ENCODE measurements at regions of chr12 and their contacts with region 1.

Region 1: GRCh38 chr12:116319898-116320621 is 42.6 kb upstream of the MED13L start:
- DNase-seq: peak in 1 of 2 donors; percentile 86
- ATAC-seq: peak; percentile 93
- H3K4me3 ChIP-seq: no peak overlapping the region
- H3K27ac ChIP-seq: peak overlapping the region; percentile 91 to 98
- H3K4me1 ChIP-seq: peaks cover 0 to 7% of the 10 kb centered on the region in 2 donors
- H3K27me3 ChIP-seq: no peaks in the 10 kb centered on the region

Region 2: DNA sequence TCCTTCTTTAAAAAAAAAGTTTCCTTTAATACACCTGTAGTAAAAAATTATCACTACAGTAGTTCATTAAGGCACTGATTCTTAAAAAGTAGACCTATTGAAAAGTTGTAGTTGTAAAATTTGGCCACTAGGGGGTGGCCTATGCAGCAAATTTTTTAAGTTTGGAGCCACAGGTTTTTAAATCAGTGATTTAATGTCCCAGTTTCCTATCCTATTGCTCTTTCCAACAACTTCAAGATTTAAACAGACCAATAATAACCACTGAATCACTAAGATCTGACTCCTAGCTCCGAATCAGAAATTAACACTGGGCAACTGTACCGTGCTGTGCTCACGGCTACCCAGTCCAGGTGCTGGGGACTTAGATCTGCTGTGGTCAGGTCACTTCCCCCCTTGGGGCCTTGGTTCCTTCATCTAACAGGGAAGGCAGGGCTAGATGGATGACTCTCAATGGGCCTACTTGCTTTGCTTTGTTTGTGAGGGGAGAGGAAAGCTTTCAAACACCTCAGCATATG is 321.9 kb before region 1 on chr12:
- intact Hi-C with region 1: no loop called
- DNase-seq: no peak
- ATAC-seq: peak; percentile 75
- H3K4me3 ChIP-seq: no peak overlapping the region
- H3K27ac ChIP-seq: peak overlapping the region in 1 of 2 donors; percentile 59
- H3K4me1 ChIP-seq: peaks cover 0 to 2% of the 10 kb centered on the region in 2 donors
- H3K27me3 ChIP-seq: no peaks in the 10 kb centered on the region

Region 3: GRCh38 chr12:116222358-116222757 is 97.7 kb before region 1 on chr12:
- intact Hi-C with region 1: no loop called
- DNase-seq: no peak
- ATAC-seq: peak; percentile 81
- H3K4me3 ChIP-seq: no peak overlapping the region
- H3K27ac ChIP-seq: no peak overlapping the region
- H3K4me1 ChIP-seq: peaks cover 0 to 5% of the 10 kb centered on the region in 2 donors
- H3K27me3 ChIP-seq: no peaks in the 10 kb centered on the region

Region 4: GRCh38 chr12:116358893-116359761 is 39.1 kb after region 1 on chr12:
- intact Hi-C with region 1: loop called in 1 of 2 experiments (anchors 2 kb)
- DNase-seq: peak; percentile 97 to 98
- ATAC-seq: peak; percentile 91
- H3K4me3 ChIP-seq: no peak overlapping the region
- H3K27ac ChIP-seq: peak overlapping the region; percentile 22 to 99
- H3K4me1 ChIP-seq: peaks cover 0 to 4% of the 10 kb centered on the region in 2 donors
- H3K27me3 ChIP-seq: no peaks in the 10 kb centered on the region

Region 5: GRCh38 chr12:116382686-116383531 is 62.8 kb after region 1 on chr12:
- intact Hi-C with region 1: loop called (anchors 2 kb)
- DNase-seq: peak; percentile 88 to 89
- ATAC-seq: peak; percentile 90
- H3K4me3 ChIP-seq: no peak overlapping the region
- H3K27ac ChIP-seq: peak overlapping the region in 1 of 2 donors; percentile 6
- H3K4me1 ChIP-seq: no peaks in the 10 kb centered on the region
- H3K27me3 ChIP-seq: no peaks in the 10 kb centered on the region